ENCODE measurements at regions of chr6 and their contacts with region 1.

Region 1: GRCh38 chr6:164106345-164106769 is 691.8 kb downstream of the QKI start:
- DNase-seq: peak; percentile 68 to 74 (median 70)
- ATAC-seq: peak; percentile 86
- H3K4me3 ChIP-seq: peak overlapping the region; percentile 14; the same call in 1 of the 2 replicates
- H3K27ac ChIP-seq: no peak overlapping the region
- H3K4me1 ChIP-seq: peaks cover 5 to 21% of the 10 kb centered on the region in 2 experiments; a peak in 4 of 5 replicates
- H3K27me3 ChIP-seq: peaks cover 2 to 12% of the 10 kb centered on the region in 2 experiments; a peak in 2 of 5 replicates
- CTCF ChIP-seq: peak; percentile 61 to 82 (median 68)
- EP300 ChIP-seq: no peak
- POLR2A ChIP-seq: no peak
- RAD21 ChIP-seq: peak; percentile 60 to 72

Region 2: GRCh38 chr6:163427498-163428254 is 678.7 kb before region 1 on chr6:
- CTCF ChIA-PET with region 1: no interaction called
- POLR2A ChIA-PET with region 1: no interaction called
- in situ Hi-C with region 1: loop called (anchors 10 kb)
- intact Hi-C with region 1: loop called (anchors 2 kb)
- DNase-seq: peak in 2 of 4 experiments; percentile 24 to 59
- ATAC-seq: peak; percentile 55
- H3K4me3 ChIP-seq: no peak overlapping the region
- H3K27ac ChIP-seq: no peak overlapping the region
- H3K4me1 ChIP-seq: peaks cover 3 to 10% of the 10 kb centered on the region in 2 experiments; a peak in 2 of 5 replicates
- H3K27me3 ChIP-seq: no peaks in the 10 kb centered on the region
- CTCF ChIP-seq: peak in 1 of 3 experiments; percentile 70; a peak in 2 of 6 replicates
- EP300 ChIP-seq: no peak
- POLR2A ChIP-seq: no peak
- RAD21 ChIP-seq: peak; percentile 80 to 88

Region 3: GRCh38 chr6:163579880-163580295 is 526.5 kb before region 1 on chr6:
- CTCF ChIA-PET with region 1: no interaction called
- POLR2A ChIA-PET with region 1: no interaction called
- in situ Hi-C with region 1: no loop called
- intact Hi-C with region 1: no loop called
- DNase-seq: peak in 3 of 4 experiments; percentile 25 to 70 (median 39)
- ATAC-seq: peak; percentile 71
- H3K4me3 ChIP-seq: no peak overlapping the region
- H3K27ac ChIP-seq: peak overlapping the region; percentile 75
- H3K4me1 ChIP-seq: peaks cover 6 to 38% of the 10 kb centered on the region in 2 experiments
- H3K27me3 ChIP-seq: no peaks in the 10 kb centered on the region
- CTCF ChIP-seq: peak; percentile 32 to 54 (median 46); a peak in 4 of 6 replicates
- EP300 ChIP-seq: peak; percentile 63; the same call in 1 of the 2 replicates
- POLR2A ChIP-seq: no peak
- RAD21 ChIP-seq: peak in 1 of 2 experiments; percentile 59

Region 4: GRCh38 chr6:163651915-163652668 is 454.3 kb before region 1 on chr6:
- CTCF ChIA-PET with region 1: no interaction called
- POLR2A ChIA-PET with region 1: no interaction called
- in situ Hi-C with region 1: no loop called
- intact Hi-C with region 1: loop called (anchors 10 kb)
- DNase-seq: no peak
- ATAC-seq: no peak; the same call in 2 of the 3 replicates
- H3K4me3 ChIP-seq: no peak overlapping the region
- H3K27ac ChIP-seq: no peak overlapping the region
- H3K4me1 ChIP-seq: no peaks in the 10 kb centered on the region
- H3K27me3 ChIP-seq: peaks cover 25 to 36% of the 10 kb centered on the region in 2 experiments; a peak in 4 of 5 replicates
- CTCF ChIP-seq: no peak
- EP300 ChIP-seq: no peak
- POLR2A ChIP-seq: no peak
- RAD21 ChIP-seq: no peak

Region 5: GRCh38 chr6:163707401-163708355 is 398.7 kb before region 1 on chr6:
- CTCF ChIA-PET with region 1: no interaction called
- POLR2A ChIA-PET with region 1: no interaction called
- in situ Hi-C with region 1: no loop called
- intact Hi-C with region 1: no loop called
- DNase-seq: peak in 1 of 4 experiments; percentile 22
- ATAC-seq: peak; percentile 73
- H3K4me3 ChIP-seq: no peak overlapping the region
- H3K27ac ChIP-seq: no peak overlapping the region
- H3K4me1 ChIP-seq: peaks cover 4 to 6% of the 10 kb centered on the region in 2 experiments; a peak in 3 of 5 replicates
- H3K27me3 ChIP-seq: peaks cover 3 to 20% of the 10 kb centered on the region in 2 experiments; a peak in 2 of 5 replicates
- CTCF ChIP-seq: peak in 2 of 3 experiments; percentile 34 to 44; a peak in 2 of 6 replicates
- EP300 ChIP-seq: no peak
- POLR2A ChIP-seq: no peak
- RAD21 ChIP-seq: 0 out of 4 replicates have a peak, but pooled peaks of 1 of the 2 experiments have one; percentile 18

Measured in K562 (cell line).